ENCODE measurements at regions of chr6 and their contacts with region 1.

Region 1: GRCh38 chr6:27146706-27147505 is 100.6 kb upstream of the PRSS16 start:
- DNase-seq: peak; percentile 85 to 96 (median 94)
- H3K4me3 ChIP-seq: peak overlapping the region; percentile 76 to 77
- H3K4me3 Mint-ChIP-seq: no peak overlapping the region
- H3K27ac ChIP-seq: peak overlapping the region; percentile 97
- H3K27ac Mint-ChIP-seq: no peak overlapping the region
- H3K4me1 ChIP-seq: peaks cover 22% of the 10 kb centered on the region
- H3K4me1 Mint-ChIP-seq: peaks cover 10 to 20% (median 13%) of the 10 kb centered on the region in 4 donors
- H3K27me3 ChIP-seq: no peaks in the 10 kb centered on the region
- H3K27me3 Mint-ChIP-seq: no peaks in the 10 kb centered on the region

Region 2: GRCh38 chr6:26183581-26184366 is 963.1 kb before region 1 on chr6:
- CTCF ChIA-PET with region 1: no interaction called
- POLR2A ChIA-PET with region 1: interaction called, 15 read pairs
- intact Hi-C with region 1: no loop called
- DNase-seq: peak; percentile 72 to 81 (median 79)
- H3K4me3 ChIP-seq: peak overlapping the region; percentile 2 to 69
- H3K4me3 Mint-ChIP-seq: peak overlapping the region; percentile 90 to 100 (median 96)
- H3K27ac ChIP-seq: peak overlapping the region; percentile 67
- H3K27ac Mint-ChIP-seq: peak overlapping the region; percentile 78 to 99 (median 95)
- H3K4me1 ChIP-seq: peaks cover 45% of the 10 kb centered on the region
- H3K4me1 Mint-ChIP-seq: peaks cover 29 to 54% (median 37%) of the 10 kb centered on the region in 4 donors
- H3K27me3 ChIP-seq: no peaks in the 10 kb centered on the region
- H3K27me3 Mint-ChIP-seq: no peaks in the 10 kb centered on the region

Region 3: DNA sequence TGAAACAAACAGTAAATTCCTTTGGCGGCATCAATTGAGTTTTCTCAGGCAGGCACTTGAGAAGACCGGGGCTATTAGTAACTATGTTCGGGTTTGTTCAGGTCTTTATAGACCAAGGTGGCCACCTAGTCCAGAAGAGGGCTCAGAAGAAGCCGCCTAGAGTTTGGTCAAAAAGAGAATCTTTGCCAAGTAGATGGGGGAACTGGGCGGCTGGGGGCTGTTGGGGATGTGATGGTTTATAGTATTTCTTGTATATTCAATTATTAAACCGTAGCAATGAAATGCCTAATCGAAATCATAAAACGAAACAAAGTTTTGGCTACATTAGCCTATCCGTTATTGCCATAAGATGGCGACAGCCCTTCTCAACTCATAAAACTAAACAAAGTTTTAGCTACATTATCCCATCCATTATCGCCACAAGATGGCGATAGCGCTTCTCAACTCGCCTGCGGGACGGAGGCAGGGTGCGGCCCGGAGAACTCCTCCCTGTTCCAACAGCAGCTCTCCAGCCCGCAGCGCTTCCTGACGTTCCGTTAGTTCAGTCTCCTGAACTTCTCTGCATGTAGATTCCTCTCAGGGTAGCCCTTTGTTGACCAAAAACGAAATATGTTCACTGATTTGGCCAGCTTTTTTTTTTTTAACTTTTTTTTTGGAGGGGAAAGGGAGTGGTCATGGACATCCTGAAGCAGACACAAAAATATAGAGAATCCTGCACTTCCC is 19.9 kb before region 1 on chr6:
- CTCF ChIA-PET with region 1: interaction called, 64 read pairs
- POLR2A ChIA-PET with region 1: interaction called, 863 read pairs
- intact Hi-C with region 1: loop called (anchors 1 kb)
- DNase-seq: peak; percentile 78 to 86 (median 83)
- H3K4me3 ChIP-seq: peak overlapping the region; percentile 13 to 34
- H3K4me3 Mint-ChIP-seq: peak overlapping the region; percentile 71 to 87 (median 80)
- H3K27ac ChIP-seq: peak overlapping the region; percentile 37
- H3K27ac Mint-ChIP-seq: peak overlapping the region; percentile 79 to 91 (median 89)
- H3K4me1 ChIP-seq: peaks cover 16% of the 10 kb centered on the region
- H3K4me1 Mint-ChIP-seq: peaks cover 14 to 16% (median 16%) of the 10 kb centered on the region in 4 donors
- H3K27me3 ChIP-seq: no peaks in the 10 kb centered on the region
- H3K27me3 Mint-ChIP-seq: no peaks in the 10 kb centered on the region

Region 4: DNA sequence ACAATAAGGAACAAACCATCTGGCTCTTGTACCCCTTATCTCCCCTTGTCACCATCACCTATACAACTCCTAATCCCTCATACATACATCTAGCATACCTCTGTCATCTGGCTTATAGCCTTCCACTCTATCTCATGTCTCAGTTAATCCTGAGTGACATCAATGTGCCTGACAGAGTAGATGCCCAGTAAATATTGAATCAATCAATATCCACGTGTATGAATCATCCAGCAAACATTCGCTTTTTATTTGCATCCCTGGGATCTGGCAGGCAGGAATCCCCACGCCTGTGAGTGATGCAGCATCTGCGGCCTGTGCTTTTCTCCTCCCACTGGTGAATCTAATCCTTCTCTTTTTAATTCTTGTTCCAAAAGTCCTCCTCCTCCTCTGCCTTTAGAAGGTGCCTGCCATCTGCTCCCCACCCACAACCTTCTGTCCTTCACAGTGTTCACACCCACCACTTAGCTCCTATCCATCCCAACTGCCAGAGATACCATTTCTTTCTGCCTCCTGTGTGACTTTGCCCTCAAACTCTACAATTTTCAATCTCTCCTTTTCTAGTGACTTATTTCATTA is 279.2 kb after region 1 on chr6:
- CTCF ChIA-PET with region 1: no interaction called
- POLR2A ChIA-PET with region 1: no interaction called
- intact Hi-C with region 1: no loop called
- DNase-seq: no peak
- H3K4me3 ChIP-seq: no peak overlapping the region
- H3K4me3 Mint-ChIP-seq: no peak overlapping the region
- H3K27ac ChIP-seq: no peak overlapping the region
- H3K27ac Mint-ChIP-seq: no peak overlapping the region
- H3K4me1 ChIP-seq: no peaks in the 10 kb centered on the region
- H3K4me1 Mint-ChIP-seq: no peaks in the 10 kb centered on the region
- H3K27me3 ChIP-seq: no peaks in the 10 kb centered on the region
- H3K27me3 Mint-ChIP-seq: peaks cover 4 to 9% of the 10 kb centered on the region in 2 donors

Region 5: DNA sequence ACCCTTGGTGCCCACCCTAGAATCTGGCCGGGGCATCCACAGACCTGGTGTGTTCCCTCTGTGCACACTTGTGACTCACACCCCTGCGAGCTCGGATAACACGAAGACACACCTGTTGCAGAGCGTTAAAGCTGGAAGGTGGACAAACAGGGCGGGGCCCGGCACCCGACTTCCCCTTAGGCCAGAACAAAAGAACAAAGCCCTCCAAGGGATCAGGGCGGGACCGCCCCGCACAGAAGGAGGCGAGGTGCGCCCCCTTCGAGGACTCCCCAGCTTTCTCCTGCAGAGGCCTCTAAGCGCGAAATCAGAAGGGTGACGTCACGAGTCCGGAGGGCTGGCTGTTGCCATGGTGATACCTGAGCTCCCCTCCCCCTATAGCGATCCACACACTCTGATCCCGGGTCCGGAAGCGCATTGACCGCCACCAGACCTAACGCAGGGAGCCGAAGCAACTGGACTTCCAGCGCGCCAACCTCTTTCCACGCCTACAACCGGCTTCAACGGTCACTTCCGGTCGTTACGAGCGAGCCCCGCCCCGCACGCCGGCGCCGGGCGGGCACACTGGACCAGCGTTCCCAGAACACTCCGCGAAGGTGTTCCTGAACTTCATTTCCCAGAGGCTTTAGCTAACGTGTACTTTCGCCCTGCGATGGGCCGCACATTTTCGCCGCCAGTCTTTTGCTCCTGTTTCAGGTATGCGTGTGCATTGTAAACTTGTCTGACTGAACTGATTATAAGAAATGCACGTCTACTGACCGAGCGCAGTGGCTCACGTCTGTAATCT is 325.9 kb after region 1 on chr6 and contains the start of gene ZNF184:
- CTCF ChIA-PET with region 1: no interaction called
- POLR2A ChIA-PET with region 1: interaction called, 14 read pairs
- intact Hi-C with region 1: no loop called
- DNase-seq: peak; percentile 86 to 90 (median 89)
- H3K4me3 ChIP-seq: peak within 1 kb of the TSS; percentile 70 to 98
- H3K4me3 Mint-ChIP-seq: peak within 1 kb of the TSS; percentile 92 to 99 (median 96)
- H3K27ac ChIP-seq: peak within 1 kb of the TSS; percentile 92
- H3K27ac Mint-ChIP-seq: peak within 1 kb of the TSS; percentile 93 to 99 (median 96)
- H3K4me1 ChIP-seq: peaks cover 56% of the 10 kb centered on the region
- H3K4me1 Mint-ChIP-seq: peaks cover 33 to 65% (median 43%) of the 10 kb centered on the region in 4 donors
- H3K27me3 ChIP-seq: no peaks in the 10 kb centered on the region
- H3K27me3 Mint-ChIP-seq: no peaks in the 10 kb centered on the region
- total RNA-seq, gene ZNF184: 15.2 to 17.4 TPM

Region 6: DNA sequence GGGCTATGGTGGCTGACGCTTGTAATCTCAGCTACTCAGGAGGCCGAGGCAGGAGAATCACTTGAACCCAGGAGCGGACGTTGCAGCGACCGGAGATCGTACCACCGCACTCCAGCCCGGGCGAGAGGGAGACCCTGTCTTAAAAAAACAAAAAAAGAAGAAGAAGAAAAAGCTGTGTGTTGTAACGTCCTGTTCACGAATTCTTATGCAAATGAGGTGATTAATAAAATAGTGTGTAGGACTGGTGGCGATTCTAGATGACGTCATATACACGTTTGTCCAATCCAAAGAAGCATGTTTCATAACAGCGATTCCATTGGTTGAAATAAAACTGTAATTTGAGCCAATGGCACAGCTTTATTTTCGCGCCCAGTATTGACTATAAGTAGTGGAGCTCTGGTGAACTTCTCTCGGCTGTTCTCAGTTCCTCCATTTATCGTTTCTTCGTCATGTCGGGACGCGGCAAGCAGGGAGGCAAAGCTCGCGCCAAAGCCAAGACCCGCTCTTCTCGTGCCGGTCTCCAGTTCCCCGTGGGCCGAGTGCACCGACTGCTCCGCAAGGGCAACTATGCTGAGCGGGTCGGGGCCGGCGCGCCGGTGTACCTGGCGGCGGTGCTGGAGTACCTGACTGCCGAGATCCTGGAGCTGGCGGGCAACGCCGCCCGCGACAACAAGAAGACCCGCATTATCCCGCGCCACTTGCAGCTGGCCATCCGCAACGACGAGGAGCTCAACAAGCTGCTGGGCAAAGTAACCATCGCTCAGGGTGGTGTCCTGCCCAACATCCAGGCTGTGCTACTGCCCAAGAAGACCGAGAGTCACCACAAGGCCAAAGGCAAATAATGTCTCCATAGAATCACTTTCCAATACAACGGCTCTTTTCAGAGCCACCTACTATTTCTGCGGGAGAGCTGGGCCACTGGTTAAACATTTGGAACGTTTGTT is 718.3 kb after region 1 on chr6:
- CTCF ChIA-PET with region 1: interaction called, 4 read pairs
- POLR2A ChIA-PET with region 1: interaction called, 84 read pairs
- intact Hi-C with region 1: loop called (anchors 2 kb)
- DNase-seq: peak; percentile 86 to 93 (median 91)
- H3K4me3 ChIP-seq: peak overlapping the region; percentile 33 to 69
- H3K4me3 Mint-ChIP-seq: peak overlapping the region; percentile 96 to 99 (median 99)
- H3K27ac ChIP-seq: peak overlapping the region; percentile 62
- H3K27ac Mint-ChIP-seq: peak overlapping the region; percentile 94 to 99 (median 98)
- H3K4me1 ChIP-seq: peaks cover 31% of the 10 kb centered on the region
- H3K4me1 Mint-ChIP-seq: peaks cover 18 to 46% (median 34%) of the 10 kb centered on the region in 4 donors
- H3K27me3 ChIP-seq: no peaks in the 10 kb centered on the region
- H3K27me3 Mint-ChIP-seq: no peaks in the 10 kb centered on the region

Region 7: DNA sequence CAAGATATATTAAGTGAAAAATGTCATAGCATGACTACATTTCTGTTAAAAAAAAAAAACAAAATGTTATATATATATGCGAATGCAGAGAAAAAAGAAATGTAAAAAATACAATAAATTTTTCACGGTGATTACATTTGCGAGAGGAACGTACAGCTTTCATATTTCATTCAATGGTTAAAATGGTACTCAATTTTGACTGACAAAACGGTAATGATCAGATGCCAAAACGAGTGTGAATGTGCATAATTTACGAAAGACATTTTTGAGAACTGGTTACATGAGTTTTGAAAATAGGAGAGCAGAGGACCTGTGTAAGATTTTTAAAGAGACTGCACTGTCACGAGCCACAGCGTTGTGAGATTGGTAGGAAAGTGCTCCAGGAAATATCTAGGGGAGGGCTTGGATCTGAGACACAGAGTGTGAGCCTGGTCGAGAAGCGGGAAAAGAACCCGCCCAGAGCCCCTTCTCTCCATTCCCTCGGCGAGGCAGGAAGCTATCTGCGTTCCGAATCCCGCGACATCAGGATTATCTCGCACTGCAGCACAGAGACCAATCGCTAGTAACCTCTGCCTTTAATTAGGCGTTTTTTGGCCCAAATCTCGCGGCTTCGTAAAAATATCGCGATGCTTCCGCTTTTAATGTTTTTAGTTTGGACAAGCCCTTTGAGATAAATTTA is 1748.4 kb after region 1 on chr6:
- CTCF ChIA-PET with region 1: no interaction called
- POLR2A ChIA-PET with region 1: interaction called, 14 read pairs
- intact Hi-C with region 1: no loop called
- DNase-seq: peak; percentile 90 to 94 (median 93)
- H3K4me3 ChIP-seq: peak overlapping the region; percentile 90 to 97
- H3K4me3 Mint-ChIP-seq: peak overlapping the region; percentile 94 to 99 (median 98)
- H3K27ac ChIP-seq: peak overlapping the region; percentile 96
- H3K27ac Mint-ChIP-seq: peak overlapping the region; percentile 97 to 100 (median 100)
- H3K4me1 ChIP-seq: peaks cover 17% of the 10 kb centered on the region
- H3K4me1 Mint-ChIP-seq: peaks cover 4 to 24% (median 18%) of the 10 kb centered on the region in 4 donors
- H3K27me3 ChIP-seq: no peaks in the 10 kb centered on the region
- H3K27me3 Mint-ChIP-seq: peaks cover 2 to 6% of the 10 kb centered on the region in 2 donors

Measured in CD4-positive, alpha-beta memory T cell (primary cell).